ENCODE measurements at regions of chr17 and their contacts with region 1.

Region 1: DNA sequence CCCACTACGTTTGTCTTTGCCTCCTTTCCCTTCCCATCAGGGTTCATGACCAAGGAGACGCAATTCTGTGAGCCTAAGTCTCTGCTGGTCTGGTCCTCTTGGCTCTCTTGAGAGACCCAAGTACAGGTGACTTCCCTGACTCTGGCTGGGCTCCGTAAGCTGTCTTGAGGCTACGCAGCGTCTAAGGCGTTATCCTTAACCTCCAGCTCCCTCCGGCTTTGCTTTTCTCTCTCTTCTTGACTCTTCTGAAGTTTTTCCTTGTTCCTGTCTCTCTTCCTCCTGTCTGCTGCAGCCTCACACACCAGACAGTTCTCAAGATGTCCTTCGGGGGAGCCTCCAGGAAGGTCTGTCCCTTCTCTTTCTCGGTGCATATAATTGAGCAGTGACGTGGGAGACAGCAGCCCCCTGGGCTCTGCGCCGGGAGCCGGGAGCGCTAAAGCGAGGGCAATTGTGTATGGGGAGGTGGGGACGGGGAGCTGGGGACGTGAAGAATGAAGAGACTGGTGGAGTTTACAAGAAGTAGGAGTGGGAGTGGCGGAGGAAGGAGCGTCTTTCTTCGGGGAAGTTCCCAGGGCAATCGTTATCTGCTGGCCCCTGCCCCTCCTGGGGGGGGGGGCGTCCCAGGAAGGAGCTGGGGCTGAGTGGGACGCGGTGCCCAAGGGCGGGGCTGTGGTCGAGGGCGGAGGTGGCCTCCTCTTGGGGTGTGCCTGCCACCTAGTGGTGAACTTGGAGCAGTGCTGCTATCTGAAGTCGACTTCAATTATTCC is 6.9 kb upstream of the PIRT start:
- DNase-seq: peak; percentile 81
- H3K4me3 Mint-ChIP-seq: peak overlapping the region; percentile 70
- H3K27ac Mint-ChIP-seq: no peak overlapping the region
- H3K4me1 Mint-ChIP-seq: peaks cover 7% of the 10 kb centered on the region
- H3K27me3 Mint-ChIP-seq: no peaks in the 10 kb centered on the region

Region 2: GRCh38 chr17:10631048-10631700 is 213.6 kb before region 1 on chr17:
- CTCF ChIA-PET with region 1: interaction called, 4 read pairs
- intact Hi-C with region 1: loop called (anchors 1 kb)
- DNase-seq: peak; percentile 40
- H3K4me3 Mint-ChIP-seq: no peak overlapping the region
- H3K27ac Mint-ChIP-seq: no peak overlapping the region
- H3K4me1 Mint-ChIP-seq: no peaks in the 10 kb centered on the region
- H3K27me3 Mint-ChIP-seq: no peaks in the 10 kb centered on the region

Region 3: GRCh38 chr17:10646392-10646990 is 198.3 kb before region 1 on chr17:
- CTCF ChIA-PET with region 1: interaction called, 26 read pairs
- intact Hi-C with region 1: loop called (anchors 1 kb)
- DNase-seq: peak; percentile 85
- H3K4me3 Mint-ChIP-seq: no peak overlapping the region
- H3K27ac Mint-ChIP-seq: no peak overlapping the region
- H3K4me1 Mint-ChIP-seq: no peaks in the 10 kb centered on the region
- H3K27me3 Mint-ChIP-seq: no peaks in the 10 kb centered on the region

Region 4: GRCh38 chr17:10697092-10698081 is 147.4 kb before region 1 on chr17 and contains the starts of genes ADPRM and SCO1:
- CTCF ChIA-PET with region 1: no interaction called
- intact Hi-C with region 1: loop called (anchors 1 kb)
- DNase-seq: peak; percentile 93
- H3K4me3 Mint-ChIP-seq: peak within 1 kb of the TSS; percentile 93
- H3K27ac Mint-ChIP-seq: peak within 1 kb of the TSS; percentile 97
- H3K4me1 Mint-ChIP-seq: peaks cover 59% of the 10 kb centered on the region
- H3K27me3 Mint-ChIP-seq: no peaks in the 10 kb centered on the region
- total RNA-seq, gene ADPRM: 11.1 to 12.6 TPM
- total RNA-seq, gene SCO1: 34.0 to 37.6 TPM

Region 5: DNA sequence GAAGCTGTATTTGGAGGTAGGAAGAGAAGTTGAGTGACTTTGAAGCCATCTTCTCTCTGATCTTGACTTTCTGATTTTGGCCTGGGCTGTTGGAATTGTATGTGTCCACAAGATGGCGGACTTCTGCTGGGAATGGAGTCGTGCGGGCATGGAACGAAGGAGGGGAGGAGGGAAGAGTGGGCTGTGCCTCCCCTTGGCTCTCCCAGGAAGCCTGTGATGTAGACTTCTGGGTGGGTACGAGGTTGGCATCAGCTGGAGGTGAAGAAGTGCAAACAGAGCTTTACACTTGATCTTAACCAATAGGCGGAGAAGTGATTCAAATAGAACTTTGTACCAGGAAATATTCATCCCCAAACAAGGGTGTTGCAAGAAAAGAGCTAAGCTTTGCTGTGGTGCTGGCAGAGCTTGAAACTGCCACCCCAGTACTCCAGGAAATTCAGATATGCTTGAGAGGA is 107.6 kb before region 1 on chr17:
- CTCF ChIA-PET with region 1: interaction called, 34 read pairs
- intact Hi-C with region 1: loop called (anchors 1 kb)
- DNase-seq: peak; percentile 58
- H3K4me3 Mint-ChIP-seq: no peak overlapping the region
- H3K27ac Mint-ChIP-seq: no peak overlapping the region
- H3K4me1 Mint-ChIP-seq: peaks cover 20% of the 10 kb centered on the region
- H3K27me3 Mint-ChIP-seq: no peaks in the 10 kb centered on the region

Region 6: DNA sequence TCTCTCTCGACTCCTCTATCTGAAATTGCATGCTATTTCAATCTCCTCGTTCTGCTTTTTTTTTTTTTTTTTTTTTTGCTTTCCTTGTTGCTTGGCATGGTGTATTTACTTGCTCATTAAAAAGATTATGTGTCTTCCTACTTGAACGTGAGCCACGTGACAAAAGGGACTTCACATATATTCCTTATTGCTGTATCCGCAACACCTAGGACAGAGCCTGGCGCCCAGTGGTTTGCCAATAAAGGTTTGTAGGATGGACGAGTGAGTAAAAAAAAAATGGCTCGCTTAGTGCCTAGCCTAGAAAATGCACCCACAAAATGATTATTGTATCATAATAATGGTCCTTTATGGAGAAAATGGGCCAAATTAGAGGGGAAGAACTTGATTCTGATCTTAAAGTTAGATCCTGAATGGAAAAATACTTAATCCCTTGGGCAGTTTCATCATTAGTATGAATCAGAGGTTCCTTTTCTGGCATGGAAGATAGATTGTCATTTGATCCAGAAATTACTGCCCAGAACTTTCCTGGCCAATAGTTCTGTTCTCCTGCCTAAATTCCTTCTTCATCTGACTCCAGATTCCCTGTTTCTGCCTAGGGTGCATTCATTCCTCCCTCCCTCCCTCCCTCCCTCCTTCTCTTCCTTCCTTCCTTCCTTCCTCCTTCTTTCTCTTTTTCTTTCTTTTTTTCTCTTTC is 101.3 kb before region 1 on chr17:
- CTCF ChIA-PET with region 1: interaction called, 34 read pairs
- intact Hi-C with region 1: loop called (anchors 2 kb)
- DNase-seq: no peak
- H3K4me3 Mint-ChIP-seq: no peak overlapping the region
- H3K27ac Mint-ChIP-seq: no peak overlapping the region
- H3K4me1 Mint-ChIP-seq: peaks cover 18% of the 10 kb centered on the region
- H3K27me3 Mint-ChIP-seq: no peaks in the 10 kb centered on the region

Region 7: GRCh38 chr17:10772425-10773380 is 72.1 kb before region 1 on chr17:
- CTCF ChIA-PET with region 1: interaction called, 21 read pairs
- intact Hi-C with region 1: loop called (anchors 1 kb)
- DNase-seq: peak; percentile 68
- H3K4me3 Mint-ChIP-seq: no peak overlapping the region
- H3K27ac Mint-ChIP-seq: no peak overlapping the region
- H3K4me1 Mint-ChIP-seq: no peaks in the 10 kb centered on the region
- H3K27me3 Mint-ChIP-seq: no peaks in the 10 kb centered on the region